ENCODE measurements at regions of chr1 and their contacts with region 1.

Region 1: GRCh38 chr1:234676103-234676594 is 66.2 kb upstream of the IRF2BP2 start:
- DNase-seq: peak; percentile 40
- H3K4me3 Mint-ChIP-seq: peak overlapping the region; percentile 82
- H3K27ac Mint-ChIP-seq: peak overlapping the region; percentile 71
- H3K4me1 Mint-ChIP-seq: peaks cover 14% of the 10 kb centered on the region
- H3K27me3 Mint-ChIP-seq: peaks cover 5% of the 10 kb centered on the region

Region 2: DNA sequence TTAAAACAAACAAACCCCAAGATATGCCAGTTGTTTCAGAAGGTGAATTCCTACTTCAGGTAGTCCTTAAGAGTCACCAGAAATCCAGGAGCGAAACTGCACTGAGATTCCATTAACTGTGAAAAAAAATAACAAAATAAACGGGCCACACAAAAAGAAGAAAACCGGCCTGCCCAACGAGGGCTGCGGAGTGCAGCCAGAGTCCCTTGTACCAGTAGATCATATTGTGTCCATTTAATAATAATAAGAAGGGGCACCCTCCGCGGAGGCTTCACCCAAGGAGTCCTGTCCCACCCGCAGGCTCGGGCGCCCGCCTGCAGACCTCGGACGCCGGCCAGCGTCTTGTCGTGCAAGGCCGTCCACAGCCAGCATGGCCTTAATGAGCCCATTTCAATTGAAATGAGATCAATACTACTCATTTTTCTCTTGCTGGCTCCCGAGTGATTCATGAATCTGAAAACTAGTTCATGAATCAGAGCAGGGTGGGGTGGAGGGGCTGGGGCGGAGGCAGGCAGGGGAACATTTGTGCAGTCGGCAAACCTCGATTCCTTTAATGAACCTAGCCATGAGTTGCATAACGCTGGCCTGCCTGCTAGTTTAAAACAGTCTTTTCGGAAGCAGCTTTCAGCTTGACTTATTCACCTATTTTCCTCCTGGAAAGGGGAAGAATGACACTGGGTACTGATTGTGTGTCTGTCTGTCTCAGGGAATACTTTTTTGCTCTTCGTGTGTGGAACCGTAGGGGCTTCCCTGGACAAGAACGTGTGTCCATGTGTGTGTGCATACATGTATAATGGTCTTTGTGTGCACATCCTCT is 47.0 kb after region 1 on chr1:
- intact Hi-C with region 1: loop called (anchors 1 kb)
- DNase-seq: peak; percentile 7
- H3K4me3 Mint-ChIP-seq: peak overlapping the region; percentile 70
- H3K27ac Mint-ChIP-seq: peak overlapping the region; percentile 97
- H3K4me1 Mint-ChIP-seq: peaks cover 79% of the 10 kb centered on the region
- H3K27me3 Mint-ChIP-seq: peaks cover 5% of the 10 kb centered on the region

Measured in activated T-helper 1 cell treated with anti-CD3 and anti-CD28 coated beads, Interleukin-12 subunit alpha, Interleukin-12 subunit beta, Interleukin-2, Interleukin-4 antibody, amounts not matched to agents 30 ng/mL and 10 ng/mL and 1 ng/mL, durations not matched to agents 14 hours and 24 hours and 36 hours (primary cell).